ENCODE measurements at regions of chr4 and their contacts with region 1.

Region 1: GRCh38 chr4:931960-932712 is at the starts of genes GAK and TMEM175:
- DNase-seq: peak; percentile 97
- H3K4me3 ChIP-seq: peak within 1 kb of the TSS; percentile 93
- H3K27ac ChIP-seq: peak within 1 kb of the TSS; percentile 36
- H3K4me1 ChIP-seq: peaks cover 48% of the 10 kb centered on the region
- CTCF ChIP-seq: no peak
- total RNA-seq, gene GAK: 77.5 and 86.1 TPM in 2 replicates
- total RNA-seq, gene TMEM175: 7.1 and 12.5 TPM in 2 replicates

Region 2: DNA sequence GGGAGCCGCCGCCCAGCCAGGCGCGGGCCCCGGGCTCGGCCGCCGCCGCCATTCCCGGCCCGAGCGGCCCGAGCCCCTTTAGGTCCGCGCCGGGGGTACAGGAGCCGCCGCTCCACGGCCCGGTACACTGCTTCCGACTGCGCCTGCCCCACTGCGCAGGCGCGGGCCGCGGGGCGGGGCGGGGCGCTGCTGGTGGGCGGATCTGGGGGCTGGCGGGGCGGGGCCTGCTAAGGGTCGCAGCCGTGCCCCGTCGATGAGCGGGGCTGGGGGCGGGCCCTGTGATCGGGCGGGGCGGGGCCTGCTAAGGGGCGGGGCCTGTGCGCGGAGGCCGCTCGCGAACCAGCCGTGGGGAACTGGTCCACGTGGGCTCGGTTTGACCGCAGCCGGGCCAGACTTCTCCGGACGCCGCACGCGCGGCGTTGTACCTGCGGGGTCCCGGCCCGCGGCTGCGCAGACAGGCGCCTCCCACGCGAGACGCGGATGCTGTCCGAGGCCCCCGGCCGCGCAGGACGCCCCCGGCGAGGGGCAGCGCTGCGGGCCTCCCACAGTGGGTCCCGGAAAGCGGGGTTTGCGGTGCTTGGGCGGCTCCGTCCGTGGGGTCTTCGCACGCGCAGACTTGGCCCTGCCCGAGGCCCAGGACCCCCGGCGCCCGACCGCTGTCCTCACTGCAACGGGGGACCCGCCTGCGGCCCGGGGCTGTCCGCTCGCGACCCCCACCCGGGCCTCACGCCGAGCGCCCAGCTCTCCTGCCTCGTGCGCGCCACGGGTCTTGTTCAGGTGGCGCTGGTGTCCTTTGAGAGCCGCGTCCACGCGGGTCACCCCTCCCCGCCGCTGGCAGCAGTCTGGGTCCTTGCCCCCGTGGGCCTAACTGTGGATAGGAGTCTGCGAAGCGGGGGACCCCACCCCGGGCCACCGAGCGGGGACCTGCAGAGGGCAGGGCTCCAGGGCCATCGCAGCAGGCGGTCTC is 41.6 kb after region 1 on chr4 and contains the start of gene DGKQ:
- CTCF ChIA-PET with region 1: no interaction called
- POLR2A ChIA-PET with region 1: no interaction called
- intact Hi-C with region 1: loop called (anchors 5 kb)
- DNase-seq: peak; percentile 83
- H3K4me3 ChIP-seq: peak within 1 kb of the TSS; percentile 95
- H3K27ac ChIP-seq: no peak within 1 kb of the TSS
- H3K4me1 ChIP-seq: peaks cover 7% of the 10 kb centered on the region
- CTCF ChIP-seq: no peak
- total RNA-seq, gene DGKQ: 8.6 and 11.3 TPM in 2 replicates

Measured in OCI-LY7 (cell line).